Activated CD8-positive, alpha-beta T cell treated with anti-CD3 and anti-CD28 coated beads for 36 hours (primary cell): ENCODE measurements at regions of chr7 and their contacts with region 1.

Region 1: GRCh38 chr7:151028131-151028947 is at the start of gene ABCB8:
- DNase-seq: peak; percentile 99
- ATAC-seq: peak; percentile 95
- H3K4me3 Mint-ChIP-seq: peak within 1 kb of the TSS; percentile 88
- H3K27ac Mint-ChIP-seq: peak within 1 kb of the TSS; percentile 95
- H3K4me1 Mint-ChIP-seq: peaks cover 17% of the 10 kb centered on the region
- H3K27me3 Mint-ChIP-seq: no peaks in the 10 kb centered on the region
- CTCF ChIP-seq: peak; percentile 55
- total RNA-seq, gene ABCB8: 41.4 to 47.5 TPM

Region 2: GRCh38 chr7:151017953-151018420 is 10.4 kb before region 1 on chr7:
- CTCF ChIA-PET with region 1: interaction called, 73 read pairs
- POLR2A ChIA-PET with region 1: interaction called, 20 read pairs
- intact Hi-C with region 1: no loop called
- DNase-seq: peak; percentile 89
- ATAC-seq: peak; percentile 71
- H3K4me3 Mint-ChIP-seq: peak overlapping the region; percentile 79
- H3K27ac Mint-ChIP-seq: peak overlapping the region; percentile 75
- H3K4me1 Mint-ChIP-seq: peaks cover 52% of the 10 kb centered on the region
- H3K27me3 Mint-ChIP-seq: peaks cover 10% of the 10 kb centered on the region
- CTCF ChIP-seq: peak; percentile 99

Region 3: DNA sequence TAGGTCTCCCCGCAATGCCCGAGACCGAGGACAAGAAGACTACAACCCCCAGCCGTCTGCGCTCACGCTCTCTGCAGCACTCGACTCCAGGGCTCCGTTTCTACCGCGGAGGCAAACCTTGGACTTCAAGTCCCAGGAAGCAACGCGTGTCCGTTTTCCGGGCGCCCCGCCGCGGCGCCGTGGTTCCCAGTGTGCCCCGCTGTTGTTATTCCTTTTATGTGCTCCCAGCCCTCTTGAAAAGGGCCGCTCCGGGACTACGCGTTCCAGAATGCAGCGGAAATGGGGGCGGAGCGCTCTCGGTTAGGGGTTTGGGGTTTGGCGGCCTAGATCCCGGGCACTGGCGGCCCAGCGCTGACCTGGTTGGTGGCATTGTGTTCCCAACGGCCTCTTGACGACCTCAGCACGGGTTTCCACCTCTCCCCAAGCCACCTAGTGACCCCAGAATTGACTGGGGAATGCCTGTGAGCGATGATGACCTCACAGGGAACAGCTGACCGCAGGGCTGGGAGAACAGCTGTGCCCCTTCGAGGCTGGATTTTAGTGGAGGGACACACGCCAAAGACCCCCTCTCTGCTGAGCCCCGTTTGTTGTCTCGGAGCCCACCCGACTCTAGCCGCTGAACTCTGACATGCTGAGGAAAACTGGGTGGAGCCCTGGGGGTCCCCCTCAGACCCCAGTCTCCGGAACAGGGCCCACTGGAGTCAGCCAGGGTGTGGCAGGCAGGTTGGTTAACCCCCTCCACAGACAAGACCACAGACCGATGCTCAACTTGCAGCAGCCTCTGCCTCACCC is 29.8 kb after region 1 on chr7:
- CTCF ChIA-PET with region 1: interaction called, 4 read pairs
- POLR2A ChIA-PET with region 1: no interaction called
- intact Hi-C with region 1: loop called (anchors 2 kb)
- DNase-seq: peak; percentile 99
- ATAC-seq: peak; percentile 95
- H3K4me3 Mint-ChIP-seq: peak overlapping the region; percentile 95
- H3K27ac Mint-ChIP-seq: peak overlapping the region; percentile 89
- H3K4me1 Mint-ChIP-seq: peaks cover 35% of the 10 kb centered on the region
- H3K27me3 Mint-ChIP-seq: no peaks in the 10 kb centered on the region
- CTCF ChIP-seq: no peak

Region 4: GRCh38 chr7:151261529-151261928 is 233.2 kb after region 1 on chr7:
- CTCF ChIA-PET with region 1: no interaction called
- POLR2A ChIA-PET with region 1: no interaction called
- intact Hi-C with region 1: no loop called
- DNase-seq: no peak
- ATAC-seq: no peak
- H3K4me3 Mint-ChIP-seq: no peak overlapping the region
- H3K27ac Mint-ChIP-seq: no peak overlapping the region
- H3K4me1 Mint-ChIP-seq: no peaks in the 10 kb centered on the region
- H3K27me3 Mint-ChIP-seq: no peaks in the 10 kb centered on the region
- CTCF ChIP-seq: no peak